Calu3 (cell line): ENCODE measurements at regions of chr4 and their contacts with region 1.

Region 1: DNA sequence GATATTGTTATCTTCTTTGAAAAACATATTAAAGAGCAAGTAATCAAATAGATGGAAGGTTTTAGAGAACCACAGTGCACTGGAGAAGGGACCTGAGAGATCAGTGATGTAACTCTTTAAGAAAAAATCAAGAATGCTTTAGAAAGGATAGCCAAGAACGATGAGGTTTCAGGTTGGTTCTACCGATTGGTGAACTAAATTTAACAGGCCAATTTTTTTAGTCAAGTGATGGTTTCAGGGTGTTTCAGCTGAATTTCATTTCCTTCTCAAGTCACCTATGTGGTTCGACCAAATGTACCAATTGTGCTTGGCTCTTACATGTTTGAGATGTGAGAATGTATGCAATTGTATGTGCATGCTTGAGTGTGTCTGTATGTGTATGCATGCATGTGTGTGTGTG is 26.5 kb downstream of the HS3ST1 start:
- DNase-seq: no peak
- H3K4me3 Mint-ChIP-seq: no peak overlapping the region
- H3K27ac Mint-ChIP-seq: no peak overlapping the region
- H3K4me1 Mint-ChIP-seq: peaks cover 21% of the 10 kb centered on the region
- H3K27me3 Mint-ChIP-seq: no peaks in the 10 kb centered on the region
- CTCF ChIP-seq: no peak

Region 2: DNA sequence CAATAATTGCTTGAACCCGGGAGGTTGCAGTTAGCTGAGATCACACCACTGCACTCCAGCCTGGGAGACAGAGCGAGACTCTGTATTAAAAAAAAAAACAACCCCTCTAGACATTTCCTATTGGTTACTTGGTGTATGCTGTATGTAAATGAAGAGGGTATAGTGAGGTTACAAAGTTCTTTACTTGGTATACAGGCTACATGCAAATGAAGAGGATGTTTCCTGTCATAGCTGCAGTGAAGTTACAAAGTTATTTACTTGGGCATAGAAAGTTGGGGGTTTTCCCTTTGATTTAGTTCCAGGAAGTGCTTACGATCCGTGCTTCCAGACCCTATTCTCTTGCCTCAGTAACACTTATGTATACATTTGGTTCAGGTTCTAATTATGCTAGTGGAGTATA is 679.2 kb before region 1 on chr4:
- CTCF ChIA-PET with region 1: no interaction called
- intact Hi-C with region 1: loop called (anchors 10 kb)
- DNase-seq: no peak
- H3K4me3 Mint-ChIP-seq: no peak overlapping the region
- H3K27ac Mint-ChIP-seq: no peak overlapping the region
- H3K4me1 Mint-ChIP-seq: peaks cover 8% of the 10 kb centered on the region
- H3K27me3 Mint-ChIP-seq: no peaks in the 10 kb centered on the region
- CTCF ChIP-seq: no peak

Region 3: DNA sequence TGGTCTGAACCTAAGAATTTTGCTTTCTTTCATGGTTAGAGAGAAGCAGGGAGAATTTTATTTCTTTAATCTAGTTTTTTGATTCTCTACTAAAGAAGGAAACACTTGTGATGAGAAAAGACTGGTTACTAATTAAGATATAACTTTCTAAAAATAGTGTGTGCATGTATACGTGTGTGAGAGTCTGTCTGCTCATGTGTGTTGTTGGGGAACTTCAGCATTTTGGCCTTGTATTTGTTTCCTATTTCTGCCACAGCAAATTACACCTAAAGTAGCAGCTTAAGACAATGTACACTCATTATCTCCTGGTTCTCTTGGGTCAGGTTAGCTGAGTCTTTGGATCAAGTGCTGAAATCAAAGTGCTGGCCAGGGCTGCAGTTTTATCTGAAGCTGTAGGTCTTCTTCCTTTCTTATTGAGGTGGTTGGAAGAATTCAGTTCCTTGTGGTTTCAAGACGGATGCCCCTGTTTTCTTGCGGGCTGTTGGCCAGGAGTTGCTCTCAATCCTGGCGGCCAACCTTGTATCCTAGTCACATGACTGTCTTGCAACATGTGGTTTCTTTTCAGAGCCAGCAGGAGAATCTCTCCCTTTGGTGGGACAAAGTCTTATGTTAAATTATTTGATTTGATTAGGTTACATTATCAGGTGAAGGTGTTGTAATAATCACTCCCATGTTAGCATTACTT is 529.2 kb before region 1 on chr4:
- CTCF ChIA-PET with region 1: no interaction called
- intact Hi-C with region 1: no loop called
- DNase-seq: no peak
- H3K4me3 Mint-ChIP-seq: no peak overlapping the region
- H3K27ac Mint-ChIP-seq: no peak overlapping the region
- H3K4me1 Mint-ChIP-seq: no peaks in the 10 kb centered on the region
- H3K27me3 Mint-ChIP-seq: peaks cover 14% of the 10 kb centered on the region
- CTCF ChIP-seq: no peak

Region 4: GRCh38 chr4:11313157-11313944 is 88.8 kb before region 1 on chr4:
- CTCF ChIA-PET with region 1: no interaction called
- intact Hi-C with region 1: no loop called
- DNase-seq: no peak
- H3K4me3 Mint-ChIP-seq: no peak overlapping the region
- H3K27ac Mint-ChIP-seq: no peak overlapping the region
- H3K4me1 Mint-ChIP-seq: peaks cover 23% of the 10 kb centered on the region
- H3K27me3 Mint-ChIP-seq: no peaks in the 10 kb centered on the region
- CTCF ChIP-seq: no peak

Region 5: GRCh38 chr4:11720292-11720691 is 318.1 kb after region 1 on chr4:
- CTCF ChIA-PET with region 1: no interaction called
- intact Hi-C with region 1: no loop called
- DNase-seq: peak; percentile 40
- H3K4me3 Mint-ChIP-seq: no peak overlapping the region
- H3K27ac Mint-ChIP-seq: peak overlapping the region; percentile 70
- H3K4me1 Mint-ChIP-seq: peaks cover 32% of the 10 kb centered on the region
- H3K27me3 Mint-ChIP-seq: no peaks in the 10 kb centered on the region
- CTCF ChIP-seq: peak; percentile 48